GM12878 (cell line): ENCODE measurements at regions of chr16 and their contacts with region 1.

Region 1: GRCh38 chr16:11977376-11978041 is 975 bp downstream of the SNX29 start:
- DNase-seq: no peak
- ATAC-seq: no peak
- H3K4me3 ChIP-seq: peak overlapping the region; percentile 96
- H3K27ac ChIP-seq: peak overlapping the region; percentile 88
- H3K4me1 ChIP-seq: peaks cover 14% of the 10 kb centered on the region
- H3K27me3 ChIP-seq: no peaks in the 10 kb centered on the region
- CTCF ChIP-seq: no peak
- EP300 ChIP-seq: no peak
- POLR2A ChIP-seq: no peak
- RAD21 ChIP-seq: no peak

Region 2: GRCh38 chr16:11698271-11698689 is 279.2 kb before region 1 on chr16:
- CTCF ChIA-PET with region 1: no interaction called
- POLR2A ChIA-PET with region 1: no interaction called
- RAD21 ChIA-PET with region 1: no interaction called
- SMC1A ChIA-PET with region 1: no interaction called
- in situ Hi-C with region 1: no loop called
- intact Hi-C with region 1: no loop called
- DNase-seq: no peak
- ATAC-seq: peak; percentile 34; the same call in 2 of the 3 replicates
- H3K4me3 ChIP-seq: no peak overlapping the region
- H3K27ac ChIP-seq: no peak overlapping the region
- H3K4me1 ChIP-seq: no peaks in the 10 kb centered on the region
- H3K27me3 ChIP-seq: no peaks in the 10 kb centered on the region
- CTCF ChIP-seq: peak in 1 of 3 experiments; percentile 21; a peak in 2 of 6 replicates
- EP300 ChIP-seq: no peak
- POLR2A ChIP-seq: no peak
- RAD21 ChIP-seq: no peak

Region 3: GRCh38 chr16:11715246-11715947 is 262.1 kb before region 1 on chr16:
- CTCF ChIA-PET with region 1: no interaction called
- POLR2A ChIA-PET with region 1: no interaction called
- RAD21 ChIA-PET with region 1: no interaction called
- SMC1A ChIA-PET with region 1: no interaction called
- in situ Hi-C with region 1: no loop called
- intact Hi-C with region 1: no loop called
- DNase-seq: no peak
- ATAC-seq: peak; percentile 80
- H3K4me3 ChIP-seq: no peak overlapping the region
- H3K27ac ChIP-seq: peak overlapping the region; percentile 48; the same call in 1 of the 2 replicates
- H3K4me1 ChIP-seq: peaks cover 16% of the 10 kb centered on the region
- H3K27me3 ChIP-seq: no peaks in the 10 kb centered on the region
- CTCF ChIP-seq: 0 out of 6 replicates have a peak, but pooled peaks of 1 of the 3 experiments have one; percentile 3
- EP300 ChIP-seq: no peak
- POLR2A ChIP-seq: no peak
- RAD21 ChIP-seq: peak; percentile 36

Region 4: DNA sequence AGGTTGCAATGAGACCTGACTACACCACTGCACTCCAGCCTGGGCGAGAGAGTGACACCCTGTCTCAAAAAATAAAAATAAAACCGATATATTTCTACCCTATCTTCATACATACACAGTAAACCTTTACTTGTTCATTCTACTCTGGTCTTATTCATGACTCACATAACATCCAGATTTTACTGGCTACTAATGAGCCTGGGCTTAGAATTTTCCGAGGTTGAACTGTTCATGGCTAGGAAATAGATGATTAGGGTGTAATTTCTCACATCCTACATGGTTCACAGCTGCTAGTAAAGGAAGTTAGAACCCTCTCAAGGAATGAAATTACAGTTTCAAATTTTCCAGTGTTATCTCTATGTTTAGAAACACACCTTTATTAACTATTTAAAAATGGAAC is 76.4 kb before region 1 on chr16:
- CTCF ChIA-PET with region 1: no interaction called
- POLR2A ChIA-PET with region 1: no interaction called
- RAD21 ChIA-PET with region 1: no interaction called
- SMC1A ChIA-PET with region 1: no interaction called
- in situ Hi-C with region 1: no loop called
- intact Hi-C with region 1: no loop called
- DNase-seq: no peak
- ATAC-seq: peak; percentile 19; the same call in 1 of the 3 replicates
- H3K4me3 ChIP-seq: no peak overlapping the region
- H3K27ac ChIP-seq: no peak overlapping the region
- H3K4me1 ChIP-seq: peaks cover 3% of the 10 kb centered on the region; the same call in 1 of the 2 replicates
- H3K27me3 ChIP-seq: no peaks in the 10 kb centered on the region
- CTCF ChIP-seq: no peak
- EP300 ChIP-seq: no peak
- POLR2A ChIP-seq: no peak
- RAD21 ChIP-seq: no peak

Region 5: DNA sequence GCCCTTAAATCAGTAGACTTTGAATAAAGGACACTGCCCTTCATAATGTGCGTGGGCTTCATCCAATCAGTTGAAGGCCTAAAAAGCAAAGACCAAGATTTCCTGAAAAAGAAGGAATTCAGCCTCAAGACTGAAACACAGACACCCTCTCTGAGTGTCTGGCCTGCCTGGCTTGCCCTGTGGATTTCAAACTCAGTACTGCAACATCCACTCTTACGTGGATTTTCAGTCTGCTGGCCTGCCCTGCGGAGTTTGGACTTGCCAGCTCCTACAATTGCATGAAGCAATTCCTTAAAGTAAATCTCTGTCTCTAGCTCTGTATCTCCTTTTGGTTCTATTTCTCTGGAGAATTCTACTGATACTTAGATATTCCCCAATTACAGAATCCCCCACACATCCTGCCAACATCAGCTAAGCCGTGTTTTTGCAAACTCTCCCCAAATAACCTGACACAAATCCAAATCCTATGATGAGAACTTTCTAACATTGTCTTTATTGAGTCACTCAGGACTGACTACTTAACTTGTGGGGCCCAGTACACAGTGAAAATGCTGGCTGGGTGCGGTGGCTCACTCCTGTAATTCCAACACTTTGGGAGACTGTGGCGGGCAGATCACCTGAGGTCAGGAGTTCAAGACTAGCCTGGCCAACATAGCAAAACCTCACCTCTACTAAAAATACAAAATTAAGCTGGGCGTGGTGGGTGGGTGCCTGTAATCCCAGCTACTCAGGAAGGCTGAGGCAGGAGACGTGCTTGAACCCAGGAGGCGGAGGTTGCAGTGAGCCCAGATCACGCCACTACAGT is 19.7 kb before region 1 on chr16:
- CTCF ChIA-PET with region 1: interaction called, 73 read pairs
- POLR2A ChIA-PET with region 1: interaction called, 171 read pairs
- RAD21 ChIA-PET with region 1: interaction called, 162 read pairs
- SMC1A ChIA-PET with region 1: interaction called, 162 read pairs
- in situ Hi-C with region 1: no loop called
- intact Hi-C with region 1: no loop called
- DNase-seq: no peak
- ATAC-seq: no peak
- H3K4me3 ChIP-seq: no peak overlapping the region
- H3K27ac ChIP-seq: no peak overlapping the region
- H3K4me1 ChIP-seq: peaks cover 20% of the 10 kb centered on the region
- H3K27me3 ChIP-seq: no peaks in the 10 kb centered on the region
- CTCF ChIP-seq: no peak
- EP300 ChIP-seq: no peak
- POLR2A ChIP-seq: no peak
- RAD21 ChIP-seq: no peak

Region 6: GRCh38 chr16:11994143-11995119 is 16.9 kb after region 1 on chr16:
- CTCF ChIA-PET with region 1: interaction called, 8 read pairs
- POLR2A ChIA-PET with region 1: interaction called, 43 read pairs
- RAD21 ChIA-PET with region 1: interaction called, 23 read pairs
- SMC1A ChIA-PET with region 1: interaction called, 31 read pairs
- in situ Hi-C with region 1: no loop called
- intact Hi-C with region 1: loop called (anchors 2 kb)
- DNase-seq: no peak
- ATAC-seq: peak; percentile 69
- H3K4me3 ChIP-seq: no peak overlapping the region
- H3K27ac ChIP-seq: peak overlapping the region; percentile 38; the same call in 1 of the 2 replicates
- H3K4me1 ChIP-seq: peaks cover 7% of the 10 kb centered on the region
- H3K27me3 ChIP-seq: no peaks in the 10 kb centered on the region
- CTCF ChIP-seq: peak in 1 of 3 experiments; percentile 10; a peak in 1 of 6 replicates
- EP300 ChIP-seq: no peak
- POLR2A ChIP-seq: no peak
- RAD21 ChIP-seq: no peak

Region 7: GRCh38 chr16:12874186-12874585 is 896.7 kb after region 1 on chr16:
- CTCF ChIA-PET with region 1: no interaction called
- POLR2A ChIA-PET with region 1: no interaction called
- RAD21 ChIA-PET with region 1: no interaction called
- SMC1A ChIA-PET with region 1: no interaction called
- in situ Hi-C with region 1: no loop called
- intact Hi-C with region 1: no loop called
- DNase-seq: no peak
- ATAC-seq: no peak
- H3K4me3 ChIP-seq: no peak overlapping the region
- H3K27ac ChIP-seq: no peak overlapping the region
- H3K4me1 ChIP-seq: no peaks in the 10 kb centered on the region
- H3K27me3 ChIP-seq: no peaks in the 10 kb centered on the region
- CTCF ChIP-seq: no peak
- EP300 ChIP-seq: no peak
- POLR2A ChIP-seq: no peak
- RAD21 ChIP-seq: no peak